AG04449 (cell line): ENCODE measurements at regions of chr13 and their contacts with region 1.

Region 1: DNA sequence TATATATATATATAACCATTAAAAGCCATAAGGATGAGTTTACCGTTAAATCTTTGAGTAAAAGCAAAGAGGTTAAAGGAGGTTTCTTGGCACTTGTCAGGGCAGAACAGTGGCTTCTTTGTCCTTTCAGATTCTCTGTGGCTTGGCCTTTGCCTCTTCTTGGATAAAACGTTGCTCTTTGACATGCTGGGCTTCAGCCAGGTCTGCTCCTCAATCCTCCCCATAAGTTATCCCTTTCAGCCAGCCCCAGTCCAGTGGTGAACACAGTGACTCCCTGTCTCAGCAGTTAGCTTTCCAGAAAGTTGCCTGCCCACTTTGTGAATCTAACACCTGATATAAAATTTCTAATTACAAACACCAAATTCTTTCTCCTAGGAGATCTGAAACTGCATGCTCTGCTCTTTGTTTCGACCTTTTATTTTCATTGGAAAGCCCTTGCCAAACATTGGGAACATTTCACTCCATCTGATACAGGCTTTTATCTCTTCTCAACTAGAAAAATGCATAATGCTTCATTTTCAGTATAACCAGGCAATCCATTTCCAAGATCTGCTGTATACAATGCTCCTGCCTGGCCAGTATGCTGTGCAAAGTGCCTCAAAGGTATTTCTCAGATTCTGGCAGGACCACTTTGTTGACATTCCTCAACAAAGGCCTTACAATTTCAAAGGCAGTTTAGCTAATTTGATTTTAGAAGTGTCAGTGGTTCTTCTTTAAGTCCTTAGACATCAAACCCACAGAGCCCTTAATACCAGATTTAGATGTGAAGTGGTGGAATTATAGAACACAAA is 16.2 kb upstream of the MED4 start:
- DNase-seq: no peak
- H3K4me3 ChIP-seq: no peak overlapping the region
- CTCF ChIP-seq: no peak

Region 2: DNA sequence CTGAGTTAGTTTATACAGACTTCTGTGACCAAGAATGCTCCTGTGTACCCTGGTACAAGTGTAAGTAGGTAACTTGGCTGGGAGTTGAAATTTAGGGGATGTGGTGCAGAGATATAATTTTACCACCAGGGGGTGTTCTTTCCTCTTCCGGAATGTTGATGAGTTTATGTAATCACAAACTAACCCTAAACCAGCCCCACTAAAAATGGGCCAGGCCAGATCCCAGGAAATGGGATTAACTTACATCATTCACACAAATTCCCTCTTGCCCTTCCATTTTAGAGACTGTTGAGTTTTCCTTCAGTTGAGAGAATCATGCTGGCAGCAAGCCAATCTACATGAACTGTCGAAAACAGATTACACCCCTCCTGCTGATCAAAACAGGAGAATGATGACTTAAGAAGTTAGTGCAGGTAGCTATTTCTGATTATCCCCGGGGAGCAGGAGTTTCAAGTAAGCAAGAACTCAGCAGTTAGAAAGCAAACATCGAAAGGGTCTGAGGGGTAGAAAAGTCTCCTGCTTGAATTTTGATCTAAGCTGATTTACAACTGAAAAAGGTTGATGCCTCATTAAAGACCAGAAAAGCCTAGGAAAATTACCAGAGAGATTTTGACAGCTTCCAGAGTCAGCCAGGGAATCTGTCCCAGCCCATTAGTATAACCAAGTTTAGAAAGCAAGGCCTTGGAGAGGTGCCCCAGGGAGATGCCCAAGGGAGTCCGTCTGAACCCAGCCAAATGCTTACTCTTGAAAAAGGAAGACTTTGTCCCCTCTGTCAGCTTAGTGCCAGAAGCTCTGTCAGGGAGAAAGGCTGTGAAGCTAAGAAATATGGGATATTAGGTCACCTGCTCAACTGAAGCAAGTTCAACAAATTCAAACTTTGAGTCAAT is 16.1 kb after region 1 on chr13:
- CTCF ChIA-PET with region 1: interaction called, 13 read pairs
- POLR2A ChIA-PET with region 1: no interaction called
- DNase-seq: peak; percentile 14
- H3K4me3 ChIP-seq: no peak overlapping the region
- CTCF ChIP-seq: peak; percentile 45